ENCODE measurements at regions of chr6 and their contacts with region 1.

Region 1: DNA sequence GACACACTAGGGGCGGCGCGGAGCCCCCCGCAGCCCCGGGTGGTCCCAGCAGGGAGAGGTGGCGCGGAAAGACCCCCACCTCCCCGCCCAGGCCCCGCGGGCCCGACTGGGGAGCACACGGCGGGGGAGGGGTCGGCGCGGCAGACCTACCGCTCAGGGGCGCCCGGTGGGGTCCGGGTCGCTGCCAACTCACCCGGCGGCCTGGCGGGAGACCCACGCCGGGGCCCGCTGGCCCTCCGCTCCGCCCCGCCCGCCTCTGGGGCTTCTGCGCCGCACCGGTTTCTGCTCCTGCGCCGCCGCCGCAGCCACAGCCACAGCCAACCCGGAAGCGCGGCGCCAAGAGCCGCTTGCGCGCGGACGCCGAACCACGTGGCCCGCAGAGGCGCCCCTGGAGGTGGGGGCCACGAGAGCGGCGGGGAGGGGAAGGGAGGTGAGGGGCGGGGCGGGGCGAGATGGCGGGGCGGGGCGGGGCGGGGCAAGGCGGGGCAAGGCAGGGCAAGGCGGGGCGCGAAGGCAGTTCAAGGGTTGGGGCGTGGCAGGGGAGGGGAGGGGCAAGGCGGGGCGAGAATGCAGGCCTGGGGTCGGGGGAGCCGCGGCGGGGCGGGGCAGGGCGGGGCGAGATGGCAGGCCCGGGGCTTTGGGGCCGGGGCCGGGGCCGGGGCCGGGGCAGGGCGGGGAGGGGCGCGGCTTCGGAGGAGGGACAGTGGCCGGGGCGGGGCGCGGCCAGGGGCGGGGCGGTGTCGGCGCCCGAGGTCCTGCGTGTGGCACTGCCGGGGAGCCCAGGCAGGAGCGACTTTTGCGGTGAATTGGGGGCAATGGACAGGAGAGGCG is at the start of gene ZBTB24:
- DNase-seq: peak; percentile 86
- H3K27ac ChIP-seq: peak within 1 kb of the TSS; percentile 76
- CTCF ChIP-seq: no peak

Region 2: GRCh38 chr6:110232450-110232849 is 749.3 kb after region 1 on chr6:
- CTCF ChIA-PET with region 1: no interaction called
- POLR2A ChIA-PET with region 1: interaction called, 13 read pairs
- DNase-seq: no peak
- H3K27ac ChIP-seq: no peak overlapping the region
- CTCF ChIP-seq: no peak

Measured in RWPE1 (cell line).